ENCODE measurements at regions of chr10 and their contacts with region 1.

Region 1: GRCh38 chr10:91088300-91089140 is 131.9 kb upstream of the PCGF5 start:
- DNase-seq: peak; percentile 19 to 59 (median 53)
- H3K4me3 ChIP-seq: no peak overlapping the region
- H3K27ac ChIP-seq: no peak overlapping the region
- H3K4me1 ChIP-seq: no peaks in the 10 kb centered on the region
- H3K27me3 ChIP-seq: no peaks in the 10 kb centered on the region

Region 2: GRCh38 chr10:91077549-91078071 is 10.9 kb before region 1 on chr10:
- CTCF ChIA-PET with region 1: interaction called, 12 read pairs
- POLR2A ChIA-PET with region 1: no interaction called
- DNase-seq: no peak
- H3K4me3 ChIP-seq: no peak overlapping the region
- H3K27ac ChIP-seq: no peak overlapping the region
- H3K4me1 ChIP-seq: no peaks in the 10 kb centered on the region
- H3K27me3 ChIP-seq: peaks cover 0 to 9% (median 2%) of the 10 kb centered on the region in 5 experiments

Region 3: GRCh38 chr10:91103384-91104192 is 15.1 kb after region 1 on chr10:
- CTCF ChIA-PET with region 1: no interaction called
- POLR2A ChIA-PET with region 1: no interaction called
- DNase-seq: peak; percentile 14 to 60 (median 34)
- H3K4me3 ChIP-seq: no peak overlapping the region
- H3K27ac ChIP-seq: no peak overlapping the region
- H3K4me1 ChIP-seq: no peaks in the 10 kb centered on the region
- H3K27me3 ChIP-seq: peaks cover 0 to 4% (median 0%) of the 10 kb centered on the region in 5 experiments

Region 4: DNA sequence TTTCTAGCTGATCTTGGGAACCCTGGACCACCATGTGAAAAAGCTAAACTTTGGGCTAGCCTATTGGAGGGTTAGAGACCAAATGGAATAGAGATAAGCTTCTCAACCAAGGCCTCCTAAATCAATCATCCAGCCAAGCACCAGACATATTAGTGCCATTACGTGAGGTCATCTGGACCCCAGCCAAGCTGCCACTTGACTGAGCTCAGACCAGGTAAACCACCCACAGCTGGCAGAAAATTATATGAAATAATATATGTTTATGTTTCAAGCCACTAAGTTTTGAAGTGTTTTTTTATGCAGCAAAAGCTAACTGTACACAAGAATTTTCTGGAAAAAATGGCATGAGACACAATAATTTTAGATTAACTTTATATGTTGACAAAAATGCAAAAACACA is 49.3 kb after region 1 on chr10:
- CTCF ChIA-PET with region 1: no interaction called
- POLR2A ChIA-PET with region 1: no interaction called
- DNase-seq: no peak
- H3K4me3 ChIP-seq: no peak overlapping the region
- H3K27ac ChIP-seq: no peak overlapping the region
- H3K4me1 ChIP-seq: no peaks in the 10 kb centered on the region
- H3K27me3 ChIP-seq: peaks cover 0 to 2% (median 0%) of the 10 kb centered on the region in 5 experiments